Right ventricle myocardium superior (tissue), 1 donor: ENCODE measurements at regions of chr20 and their contacts with region 1.

Region 1: GRCh38 chr20:47886460-47887041 is 101.3 kb upstream of the SULF2 start:
- DNase-seq: no peak
- ATAC-seq: no peak

Region 2: GRCh38 chr20:47809913-47810622 is 76.5 kb before region 1 on chr20:
- intact Hi-C with region 1: loop called (anchors 10 kb)
- DNase-seq: no peak
- ATAC-seq: no peak

Region 3: DNA sequence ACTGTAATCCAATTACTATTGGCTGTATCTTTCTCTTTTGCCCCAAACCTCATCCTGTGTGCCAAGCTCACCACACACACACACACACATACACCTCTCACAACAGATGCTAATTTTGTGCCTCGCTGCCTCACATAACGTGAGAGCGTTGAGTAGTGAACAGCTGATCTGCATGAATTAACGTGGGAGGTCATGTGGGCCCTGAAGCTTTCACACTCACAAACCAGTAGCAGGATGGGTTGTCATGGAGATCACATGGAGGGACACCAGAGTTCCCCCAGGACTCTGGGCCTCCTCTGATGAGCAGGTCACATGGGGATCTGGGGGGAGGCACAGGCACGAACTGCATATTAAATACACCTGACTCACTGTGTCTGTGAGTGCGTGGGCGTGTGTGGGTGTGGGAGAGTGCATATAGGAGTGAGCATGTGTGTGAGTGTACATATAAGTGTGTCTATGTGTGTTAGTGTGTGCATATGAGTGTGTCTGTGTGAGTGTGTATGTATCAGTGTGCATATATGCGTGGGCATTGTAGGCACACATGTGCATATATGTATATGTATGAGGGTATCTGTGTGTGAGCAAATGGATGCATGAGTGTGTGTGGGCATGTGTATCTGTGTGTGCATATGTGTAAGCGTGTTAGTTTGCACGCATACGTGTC is 38.6 kb before region 1 on chr20:
- intact Hi-C with region 1: loop called (anchors 10 kb)
- DNase-seq: no peak
- ATAC-seq: no peak

Region 4: GRCh38 chr20:48523212-48523941 is 636.8 kb after region 1 on chr20:
- intact Hi-C with region 1: loop called (anchors 5 kb)
- DNase-seq: no peak
- ATAC-seq: peak; percentile 51

Region 5: DNA sequence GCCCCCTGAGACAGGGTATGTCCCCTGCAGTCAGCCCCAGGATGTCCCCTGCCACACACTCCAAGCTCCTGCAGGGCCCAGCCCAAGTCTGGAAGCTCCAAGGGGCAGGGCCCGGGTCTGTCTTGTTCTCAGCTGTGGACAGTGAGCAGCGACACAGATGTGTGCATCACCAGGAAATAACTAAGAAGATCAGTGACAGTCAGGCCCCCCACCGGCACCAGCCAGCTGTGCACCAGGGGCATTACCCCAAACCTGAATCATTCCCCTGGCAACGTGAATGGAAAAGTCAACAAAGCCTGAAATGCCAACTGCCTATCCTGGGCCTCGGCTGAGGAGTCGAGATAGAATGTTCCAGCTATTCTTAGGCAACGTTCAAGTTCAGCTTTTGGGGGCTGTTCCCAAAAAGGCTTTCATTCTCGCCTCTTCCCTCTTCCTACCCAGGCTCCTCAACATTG is 836.2 kb after region 1 on chr20:
- intact Hi-C with region 1: no loop called
- DNase-seq: no peak
- ATAC-seq: peak; percentile 37